CD8-positive, alpha-beta T cell (primary cell): ENCODE measurements at regions of chr13 and their contacts with region 1.

Region 1: GRCh38 chr13:23579072-23579895 is 9.1 kb downstream of the TNFRSF19 start:
- DNase-seq: peak; percentile 86 to 95 (median 92)
- ATAC-seq: peak; percentile 96
- H3K4me3 ChIP-seq: peak overlapping the region; percentile 60 to 76
- H3K4me3 Mint-ChIP-seq: peak overlapping the region; percentile 66
- H3K27ac ChIP-seq: peak overlapping the region; percentile 44 to 56
- H3K27ac Mint-ChIP-seq: no peak overlapping the region
- H3K4me1 ChIP-seq: peaks cover 10% of the 10 kb centered on the region
- H3K4me1 Mint-ChIP-seq: peaks cover 18% of the 10 kb centered on the region
- H3K27me3 ChIP-seq: peaks cover 8 to 15% of the 10 kb centered on the region in 2 experiments
- H3K27me3 Mint-ChIP-seq: peaks cover 44% of the 10 kb centered on the region
- CTCF ChIP-seq: no peak

Region 2: DNA sequence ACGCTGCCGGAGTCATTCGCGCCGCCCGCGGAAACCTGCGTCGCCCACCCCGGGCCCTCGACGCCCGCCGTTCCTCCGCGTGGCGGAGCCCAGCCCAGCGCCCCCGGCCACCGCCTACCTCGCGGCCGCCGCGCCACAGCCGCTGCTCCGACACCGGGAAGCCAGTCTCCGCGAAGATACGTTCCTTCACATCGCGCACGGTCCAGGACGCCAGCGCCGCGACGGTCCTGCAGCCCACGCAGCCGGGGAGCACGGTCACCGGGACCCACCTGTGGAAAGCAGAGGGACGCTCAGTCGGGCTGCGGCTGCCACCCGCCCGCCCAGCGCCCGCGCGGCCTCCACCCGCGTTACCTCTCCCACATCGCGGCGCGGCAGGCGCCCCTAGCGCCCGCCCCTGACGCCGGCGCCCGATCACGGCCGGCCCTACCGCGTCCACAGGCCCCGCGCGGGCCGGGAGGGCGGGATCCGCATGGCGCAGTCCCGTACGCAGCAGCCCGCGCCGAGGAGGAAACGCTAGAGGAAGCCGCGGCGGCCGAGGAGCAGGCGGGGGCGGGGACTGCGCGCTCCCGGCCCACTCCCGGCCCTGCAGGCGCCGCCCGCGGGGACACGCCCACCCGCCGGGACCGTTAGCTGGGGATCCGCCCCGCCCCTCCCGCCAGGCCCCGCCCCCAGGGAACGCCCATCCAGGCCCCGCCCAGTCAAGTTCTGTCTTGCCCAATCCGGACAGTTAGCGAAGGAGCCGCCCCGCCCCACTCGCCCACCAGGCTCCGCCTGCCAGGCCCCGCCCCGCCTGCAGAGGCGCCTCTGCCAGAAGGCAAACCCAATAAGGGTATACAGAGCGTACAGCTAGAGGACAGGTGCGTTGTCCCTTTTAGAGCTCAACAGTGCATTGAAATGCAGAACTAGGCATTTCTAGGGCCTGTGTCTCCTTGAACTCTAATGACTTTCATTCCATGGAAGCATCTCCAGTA is 204.0 kb before region 1 on chr13:
- CTCF ChIA-PET with region 1: no interaction called
- POLR2A ChIA-PET with region 1: no interaction called
- intact Hi-C with region 1: loop called (anchors 1 to 2 kb)
- DNase-seq: peak; percentile 95 to 99 (median 97)
- ATAC-seq: peak; percentile 87
- H3K4me3 ChIP-seq: peak overlapping the region; percentile 52 to 69
- H3K4me3 Mint-ChIP-seq: peak overlapping the region; percentile 81
- H3K27ac ChIP-seq: peak overlapping the region; percentile 42 to 68
- H3K27ac Mint-ChIP-seq: peak overlapping the region; percentile 58
- H3K4me1 ChIP-seq: peaks cover 37% of the 10 kb centered on the region
- H3K4me1 Mint-ChIP-seq: peaks cover 57% of the 10 kb centered on the region
- H3K27me3 ChIP-seq: no peaks in the 10 kb centered on the region
- H3K27me3 Mint-ChIP-seq: no peaks in the 10 kb centered on the region
- CTCF ChIP-seq: peak; percentile 37

Region 3: DNA sequence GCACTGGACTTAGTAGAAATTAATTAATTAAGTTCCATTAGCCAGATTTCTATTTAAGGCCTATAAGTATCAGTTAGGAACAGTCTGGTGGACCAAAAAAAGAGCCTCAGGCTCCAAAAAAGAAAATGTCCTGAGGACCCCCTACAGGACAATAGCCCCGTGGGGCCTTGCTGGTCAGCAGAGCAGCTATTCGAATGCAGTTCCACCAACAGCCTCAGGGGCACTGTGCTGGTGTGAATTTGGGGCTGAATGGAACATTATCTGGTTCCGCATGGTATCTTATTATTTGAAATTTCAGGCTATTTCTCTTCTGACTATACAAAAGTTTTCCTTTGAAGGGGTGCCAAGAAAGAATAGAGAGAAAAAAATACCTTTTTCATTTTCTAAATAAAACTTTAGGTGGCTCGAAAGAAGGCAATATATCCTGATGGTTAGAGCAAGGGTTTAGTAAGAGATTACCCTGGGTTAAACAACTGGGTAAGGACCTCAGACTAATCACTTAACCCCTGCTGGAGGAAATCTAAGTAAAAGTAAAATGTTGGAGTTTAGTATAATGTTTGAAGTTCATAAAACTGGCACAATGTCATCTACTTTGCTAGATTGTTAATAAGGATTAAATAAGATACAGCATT is 162.7 kb after region 1 on chr13:
- CTCF ChIA-PET with region 1: no interaction called
- POLR2A ChIA-PET with region 1: no interaction called
- intact Hi-C with region 1: loop called in 1 of 2 experiments (anchors 2 kb)
- DNase-seq: no peak
- ATAC-seq: no peak
- H3K4me3 ChIP-seq: no peak overlapping the region
- H3K4me3 Mint-ChIP-seq: no peak overlapping the region
- H3K27ac ChIP-seq: no peak overlapping the region
- H3K27ac Mint-ChIP-seq: no peak overlapping the region
- H3K4me1 ChIP-seq: peaks cover 20% of the 10 kb centered on the region
- H3K4me1 Mint-ChIP-seq: peaks cover 22% of the 10 kb centered on the region
- H3K27me3 ChIP-seq: no peaks in the 10 kb centered on the region
- H3K27me3 Mint-ChIP-seq: no peaks in the 10 kb centered on the region
- CTCF ChIP-seq: no peak

Region 4: DNA sequence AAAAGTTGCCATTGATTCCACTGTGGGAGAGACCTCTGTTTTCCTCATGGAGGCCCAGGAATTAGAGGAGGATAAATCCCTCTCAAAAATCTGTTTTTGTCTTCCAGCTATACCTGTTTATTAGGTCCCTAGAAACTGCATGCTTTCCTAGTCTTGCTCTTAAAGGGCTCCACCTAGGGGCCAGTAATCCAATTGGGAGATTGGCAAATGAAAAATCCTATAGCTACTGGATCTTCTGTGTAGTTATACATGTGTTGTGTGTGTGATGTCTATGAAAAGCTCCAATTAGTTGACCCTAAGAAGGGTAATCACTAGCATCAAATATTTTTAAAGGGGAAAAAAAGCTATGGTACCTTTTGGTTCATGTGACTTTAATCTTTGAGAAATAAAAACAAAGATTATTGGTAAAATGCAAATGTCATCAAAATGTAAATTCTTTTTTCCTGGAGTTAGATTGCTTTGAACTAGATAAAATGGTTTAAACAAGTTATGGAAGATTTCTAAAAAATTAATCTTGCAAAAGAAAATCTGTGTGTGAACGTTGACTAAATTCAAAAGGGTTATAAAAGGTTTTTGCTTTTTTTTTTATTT is 381.4 kb after region 1 on chr13:
- CTCF ChIA-PET with region 1: no interaction called
- POLR2A ChIA-PET with region 1: no interaction called
- intact Hi-C with region 1: loop called (anchors 5 to 10 kb)
- DNase-seq: peak in 2 of 9 experiments; percentile 25 to 38
- ATAC-seq: no peak
- H3K4me3 ChIP-seq: no peak overlapping the region
- H3K4me3 Mint-ChIP-seq: no peak overlapping the region
- H3K27ac ChIP-seq: no peak overlapping the region
- H3K27ac Mint-ChIP-seq: no peak overlapping the region
- H3K4me1 ChIP-seq: no peaks in the 10 kb centered on the region
- H3K4me1 Mint-ChIP-seq: peaks cover 2% of the 10 kb centered on the region
- H3K27me3 ChIP-seq: no peaks in the 10 kb centered on the region
- H3K27me3 Mint-ChIP-seq: no peaks in the 10 kb centered on the region
- CTCF ChIP-seq: peak; percentile 54

Region 5: DNA sequence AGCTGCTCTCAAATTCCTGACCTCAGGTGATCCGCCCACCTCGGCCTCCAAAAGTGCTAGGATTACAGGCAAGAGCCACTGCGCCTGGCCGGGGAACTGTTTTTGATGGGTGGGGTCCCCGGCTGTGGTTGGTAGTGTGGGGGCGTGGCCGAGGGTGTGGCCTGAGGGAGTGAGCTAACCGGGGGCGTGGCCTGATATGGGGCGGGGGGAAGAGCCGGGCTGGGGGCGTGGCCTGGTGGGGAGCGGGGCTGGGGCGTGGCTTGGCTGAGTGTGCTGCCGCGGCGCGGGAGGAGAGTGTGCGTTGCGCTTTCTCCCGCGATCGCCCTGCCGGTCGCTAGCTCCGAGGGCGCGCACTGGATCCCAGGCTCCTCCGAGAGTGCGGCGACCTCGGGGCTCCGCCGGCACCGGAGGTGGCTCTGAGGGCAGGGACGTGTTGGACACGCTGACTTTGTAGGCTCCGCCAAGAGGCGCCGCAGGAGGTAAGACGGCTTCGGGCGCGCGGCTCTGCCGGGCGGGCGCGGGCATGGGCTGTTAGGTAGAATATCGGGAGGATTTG is 581.2 kb after region 1 on chr13 and contains the start of gene SPATA13:
- CTCF ChIA-PET with region 1: no interaction called
- POLR2A ChIA-PET with region 1: no interaction called
- intact Hi-C with region 1: loop called (anchors 2 kb)
- DNase-seq: peak; percentile 87 to 97 (median 94)
- ATAC-seq: peak; percentile 96
- H3K4me3 ChIP-seq: peak within 1 kb of the TSS; percentile 87 to 89
- H3K4me3 Mint-ChIP-seq: peak within 1 kb of the TSS; percentile 87
- H3K27ac ChIP-seq: peak within 1 kb of the TSS; percentile 29 to 56
- H3K27ac Mint-ChIP-seq: peak within 1 kb of the TSS; percentile 72
- H3K4me1 ChIP-seq: peaks cover 16% of the 10 kb centered on the region
- H3K4me1 Mint-ChIP-seq: peaks cover 26% of the 10 kb centered on the region
- H3K27me3 ChIP-seq: no peaks in the 10 kb centered on the region
- H3K27me3 Mint-ChIP-seq: no peaks in the 10 kb centered on the region
- CTCF ChIP-seq: no peak
- total RNA-seq, gene SPATA13: 102 to 106 TPM

Region 6: DNA sequence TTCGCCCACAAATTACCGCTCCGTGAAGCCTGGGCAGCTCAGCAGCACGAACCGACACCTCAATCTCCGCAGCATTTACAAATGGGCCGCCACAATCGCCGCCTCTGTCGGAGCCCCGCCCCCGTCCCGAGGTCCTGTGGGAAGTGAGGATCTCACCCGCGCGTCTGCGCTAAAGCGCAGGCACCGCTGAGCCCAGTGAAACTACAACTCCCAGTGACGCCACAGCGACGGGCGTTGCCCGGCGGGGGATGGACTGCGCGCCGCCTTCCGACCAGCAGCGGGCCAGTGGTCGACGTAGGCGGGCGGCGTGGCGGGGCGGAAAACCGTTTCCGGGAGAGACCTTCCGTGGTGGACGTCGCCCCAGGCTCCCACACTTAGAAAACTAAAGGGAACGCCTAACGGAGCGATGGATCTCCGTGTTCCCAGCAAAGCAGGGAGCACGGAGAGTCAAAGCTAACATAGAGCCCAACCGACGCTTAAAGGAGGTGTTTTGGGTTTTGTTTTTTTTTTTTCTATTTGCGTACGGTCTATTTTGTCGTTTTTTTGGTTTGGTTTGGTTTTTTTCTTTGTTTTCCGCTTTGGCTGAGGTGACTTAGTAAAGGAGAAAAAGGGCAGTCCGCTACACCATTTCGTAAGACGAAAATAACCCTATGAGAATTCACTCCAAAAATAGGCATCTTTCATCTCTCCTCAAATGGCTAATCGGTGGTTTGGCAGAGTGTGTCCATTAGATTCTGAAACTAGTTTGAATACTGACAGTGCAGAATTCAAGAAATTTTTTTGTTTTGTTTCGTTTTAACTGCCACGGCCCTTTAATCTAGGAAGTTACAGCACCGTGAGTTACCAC is 1343.7 kb after region 1 on chr13:
- CTCF ChIA-PET with region 1: no interaction called
- POLR2A ChIA-PET with region 1: interaction called, 4 read pairs
- intact Hi-C with region 1: loop called (anchors 2 to 10 kb)
- DNase-seq: peak; percentile 85 to 96 (median 94)
- ATAC-seq: peak; percentile 99
- H3K4me3 ChIP-seq: peak overlapping the region; percentile 82 to 95
- H3K4me3 Mint-ChIP-seq: peak overlapping the region; percentile 96
- H3K27ac ChIP-seq: peak overlapping the region; percentile 70 to 94
- H3K27ac Mint-ChIP-seq: peak overlapping the region; percentile 92
- H3K4me1 ChIP-seq: peaks cover 9% of the 10 kb centered on the region
- H3K4me1 Mint-ChIP-seq: peaks cover 15% of the 10 kb centered on the region
- H3K27me3 ChIP-seq: no peaks in the 10 kb centered on the region
- H3K27me3 Mint-ChIP-seq: no peaks in the 10 kb centered on the region
- CTCF ChIP-seq: no peak